ENCODE measurements at regions of chr19 and their contacts with region 1.

Region 1: DNA sequence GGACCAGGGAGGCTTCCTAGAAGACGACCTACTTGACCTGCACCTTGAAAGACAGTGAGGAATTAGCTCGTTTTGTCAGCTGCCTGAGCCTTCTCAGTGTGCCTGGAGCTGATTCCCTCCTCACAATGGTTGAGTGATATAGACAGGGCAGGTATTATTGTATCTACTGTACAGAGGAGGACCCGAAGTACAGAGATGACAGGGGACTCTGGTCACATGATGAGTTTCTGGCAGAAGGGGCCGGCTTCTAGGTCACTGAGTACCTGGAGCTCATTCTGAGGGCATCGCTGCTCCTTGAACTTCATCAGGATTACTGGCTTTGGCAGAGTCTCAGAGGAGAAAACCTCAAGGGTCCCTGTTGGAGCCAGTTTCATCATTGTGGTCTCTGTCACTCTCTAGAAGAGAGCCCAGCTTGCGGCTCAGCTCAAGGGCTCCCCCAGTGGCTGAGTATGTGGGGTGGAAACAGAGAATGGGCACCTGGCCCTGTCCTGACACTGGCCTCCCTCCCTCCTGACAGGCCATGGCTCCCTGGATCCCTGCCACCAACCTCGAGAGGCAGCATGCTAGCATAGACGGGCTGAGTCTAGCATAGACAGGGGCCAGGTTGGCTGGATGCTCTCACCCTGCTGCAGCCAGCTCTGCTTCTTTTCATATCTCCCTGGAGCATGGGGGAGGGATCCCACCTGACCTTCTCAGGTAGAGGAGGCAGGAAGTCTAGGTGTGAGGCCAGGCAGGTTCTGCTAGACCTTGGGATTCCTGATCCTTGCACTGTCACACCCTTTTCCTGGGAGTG is 38.7 kb downstream of the NFIX start:
- DNase-seq: no peak
- H3K4me3 ChIP-seq: no peak overlapping the region
- H3K27ac ChIP-seq: peak overlapping the region; percentile 21
- H3K27me3 ChIP-seq: no peaks in the 10 kb centered on the region
- CTCF ChIP-seq: peak; percentile 78

Region 2: DNA sequence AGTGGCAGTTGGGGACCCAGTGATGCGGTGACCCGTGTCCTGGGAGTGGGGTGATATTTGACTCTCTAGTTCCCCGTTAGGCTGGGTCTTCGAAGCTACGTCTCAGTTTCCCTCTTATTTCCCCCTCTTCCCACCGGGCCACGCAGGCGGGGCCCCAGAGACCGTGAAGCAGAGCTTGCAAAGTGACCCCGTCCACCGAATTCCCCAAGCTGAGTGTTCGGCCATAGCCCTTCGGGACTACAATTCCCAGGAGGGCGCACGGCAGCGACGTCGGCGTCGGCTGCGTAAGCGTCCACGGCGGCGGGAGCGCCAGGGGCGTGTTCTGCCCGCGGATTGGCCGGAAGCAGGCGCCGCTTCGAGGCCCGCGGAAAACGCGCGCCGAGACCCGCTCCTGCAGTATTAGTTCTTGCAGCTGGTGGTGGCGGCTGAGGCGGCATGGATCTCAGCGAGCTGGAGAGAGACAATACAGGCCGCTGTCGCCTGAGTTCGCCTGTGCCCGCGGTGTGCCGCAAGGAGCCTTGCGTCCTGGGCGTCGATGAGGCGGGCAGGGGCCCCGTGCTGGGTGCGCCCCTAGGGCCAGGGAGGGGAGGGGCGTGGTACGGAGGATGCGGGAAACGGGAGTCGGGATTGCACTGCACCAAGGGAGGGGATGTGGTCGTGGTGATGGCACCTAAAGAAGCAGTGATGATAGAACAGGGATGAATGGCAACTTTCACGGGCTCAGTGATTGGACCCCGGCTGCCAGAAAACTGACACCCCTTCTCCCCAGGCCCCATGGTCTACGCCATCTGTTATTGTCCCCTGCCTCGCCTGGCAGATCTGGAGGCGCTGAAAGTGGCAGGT is 227.6 kb before region 1 on chr19 and contains the start of gene RNASEH2A:
- CTCF ChIA-PET with region 1: no interaction called
- POLR2A ChIA-PET with region 1: no interaction called
- DNase-seq: peak; percentile 63
- H3K4me3 ChIP-seq: peak within 1 kb of the TSS; percentile 83
- H3K27ac ChIP-seq: no peak within 1 kb of the TSS
- H3K27me3 ChIP-seq: no peaks in the 10 kb centered on the region
- CTCF ChIP-seq: no peak
- polyA plus RNA-seq, gene RNASEH2A: 11.6 and 11.7 TPM in 2 replicates

Region 3: DNA sequence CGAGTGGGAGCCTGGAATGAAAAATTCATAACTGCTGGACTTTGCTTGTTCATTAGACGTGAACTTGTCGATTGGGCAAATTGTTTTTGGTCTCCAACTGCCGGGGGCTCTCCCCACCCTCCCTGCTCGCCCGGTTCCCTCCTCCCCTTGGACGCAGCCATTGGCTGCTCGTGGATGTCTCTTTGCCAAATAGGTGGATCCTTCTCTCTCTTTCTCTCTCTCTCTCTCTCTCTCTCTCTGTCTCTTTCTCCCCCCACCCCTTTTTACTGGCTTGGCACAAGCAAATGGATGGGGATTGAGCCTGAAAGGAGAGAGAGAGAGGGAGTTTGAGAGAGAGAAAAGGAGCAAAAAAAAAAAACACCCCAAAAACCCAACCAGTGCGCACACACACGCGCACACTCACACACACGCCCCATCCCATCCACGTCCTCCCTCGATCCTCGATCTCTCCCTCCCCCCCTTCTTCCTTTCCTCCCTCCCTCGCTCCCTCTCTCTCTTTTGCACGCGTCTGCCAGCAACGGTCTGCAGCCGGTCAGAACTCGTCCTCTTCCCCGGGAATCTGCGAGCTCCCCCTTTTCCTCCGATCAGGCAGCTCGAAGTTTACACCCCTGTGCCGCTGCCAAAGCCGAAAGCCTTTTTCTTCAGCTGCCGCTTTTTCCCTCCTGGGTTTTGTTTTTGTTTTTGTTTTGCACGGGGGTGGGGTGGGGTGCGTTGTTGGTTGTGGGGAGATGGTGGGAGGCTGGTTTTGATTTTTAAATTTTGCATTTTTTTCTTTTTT is 11.0 kb before region 1 on chr19:
- CTCF ChIA-PET with region 1: interaction called, 10 read pairs
- POLR2A ChIA-PET with region 1: interaction called, 11 read pairs
- DNase-seq: peak; percentile 92
- H3K4me3 ChIP-seq: peak overlapping the region; percentile 65
- H3K27ac ChIP-seq: peak overlapping the region; percentile 99
- H3K27me3 ChIP-seq: no peaks in the 10 kb centered on the region
- CTCF ChIP-seq: no peak

Region 4: GRCh38 chr19:13051267-13052165 is 17.5 kb after region 1 on chr19:
- CTCF ChIA-PET with region 1: interaction called, 66 read pairs
- POLR2A ChIA-PET with region 1: interaction called, 4 read pairs
- DNase-seq: no peak
- H3K4me3 ChIP-seq: no peak overlapping the region
- H3K27ac ChIP-seq: no peak overlapping the region
- H3K27me3 ChIP-seq: no peaks in the 10 kb centered on the region
- CTCF ChIP-seq: no peak

Measured in AG04450 (cell line).